ENCODE measurements at regions of chr5 and their contacts with region 1.

Region 1: GRCh38 chr5:180852495-180852894 is 8.6 kb downstream of the ZFP62 start:
- DNase-seq: no peak
- H3K4me3 ChIP-seq: no peak overlapping the region
- CTCF ChIP-seq: no peak

Region 2: DNA sequence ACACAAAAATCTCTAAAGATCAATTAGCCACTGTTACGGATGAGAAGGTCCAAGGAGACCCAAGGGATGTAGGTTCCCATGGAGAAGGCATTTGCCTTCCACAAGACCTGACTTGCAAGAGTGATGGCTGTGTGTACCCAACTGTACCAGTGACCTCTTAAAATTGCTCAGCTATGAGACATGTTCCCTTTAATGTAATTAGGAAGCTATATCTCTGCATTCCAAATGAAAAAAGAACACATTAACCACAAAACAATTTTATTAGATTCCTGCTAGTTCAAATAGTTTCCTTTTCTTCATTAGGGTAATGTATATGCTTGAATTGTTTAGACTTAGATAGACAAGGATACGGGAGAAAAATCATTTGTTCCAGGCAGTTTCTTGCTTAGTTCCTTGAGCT is 116.0 kb before region 1 on chr5:
- in situ Hi-C with region 1: no loop called
- DNase-seq: no peak
- H3K4me3 ChIP-seq: no peak overlapping the region
- CTCF ChIP-seq: no peak

Region 3: GRCh38 chr5:180755601-180756000 is 96.9 kb before region 1 on chr5:
- in situ Hi-C with region 1: loop called (anchors 5 kb)
- DNase-seq: no peak
- H3K4me3 ChIP-seq: no peak overlapping the region
- CTCF ChIP-seq: no peak

Measured in astrocyte of the cerebellum (primary cell).